ENCODE measurements at regions of chr11 and their contacts with region 1.

Region 1: DNA sequence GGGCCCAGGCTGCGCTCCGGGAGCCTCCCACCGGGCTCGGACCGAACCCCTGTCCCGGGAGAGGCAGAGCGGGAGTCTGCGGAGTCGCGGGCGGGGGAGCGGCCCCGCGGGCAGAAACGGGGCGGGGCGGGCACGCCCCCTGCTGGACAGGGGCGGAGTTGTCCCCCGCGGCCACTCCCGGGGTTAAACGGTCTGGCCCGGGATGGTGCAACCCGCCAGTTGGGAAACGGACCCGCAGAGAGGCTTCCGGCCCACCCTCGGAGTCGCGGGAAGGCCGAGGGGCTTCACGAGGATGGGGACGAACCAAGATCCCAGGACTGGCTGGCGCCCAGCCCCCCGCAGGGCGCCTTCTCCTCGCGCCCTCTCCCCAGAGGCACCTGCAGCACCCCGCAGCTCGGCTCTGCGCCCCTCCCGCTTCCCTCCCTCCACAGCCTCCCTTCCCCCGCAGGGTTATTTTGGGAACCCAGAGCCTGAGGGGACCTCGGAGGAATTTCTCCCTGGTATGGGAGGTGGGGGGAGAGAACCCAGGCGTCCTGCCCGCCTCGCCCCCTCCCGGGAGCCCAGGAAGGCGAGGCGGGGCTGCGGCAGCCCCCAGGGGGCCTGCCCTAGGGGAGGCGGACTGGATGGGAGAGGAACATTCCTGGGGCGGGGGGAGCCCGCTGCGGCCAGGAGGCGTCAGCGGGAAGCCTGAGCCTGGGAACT is 902 bp downstream of the RASGRP2 start:
- DNase-seq: peak; percentile 69
- H3K4me3 Mint-ChIP-seq: peak overlapping the region; percentile 92
- H3K27ac Mint-ChIP-seq: no peak overlapping the region
- H3K4me1 Mint-ChIP-seq: peaks cover 39% of the 10 kb centered on the region
- H3K27me3 Mint-ChIP-seq: no peaks in the 10 kb centered on the region

Region 2: DNA sequence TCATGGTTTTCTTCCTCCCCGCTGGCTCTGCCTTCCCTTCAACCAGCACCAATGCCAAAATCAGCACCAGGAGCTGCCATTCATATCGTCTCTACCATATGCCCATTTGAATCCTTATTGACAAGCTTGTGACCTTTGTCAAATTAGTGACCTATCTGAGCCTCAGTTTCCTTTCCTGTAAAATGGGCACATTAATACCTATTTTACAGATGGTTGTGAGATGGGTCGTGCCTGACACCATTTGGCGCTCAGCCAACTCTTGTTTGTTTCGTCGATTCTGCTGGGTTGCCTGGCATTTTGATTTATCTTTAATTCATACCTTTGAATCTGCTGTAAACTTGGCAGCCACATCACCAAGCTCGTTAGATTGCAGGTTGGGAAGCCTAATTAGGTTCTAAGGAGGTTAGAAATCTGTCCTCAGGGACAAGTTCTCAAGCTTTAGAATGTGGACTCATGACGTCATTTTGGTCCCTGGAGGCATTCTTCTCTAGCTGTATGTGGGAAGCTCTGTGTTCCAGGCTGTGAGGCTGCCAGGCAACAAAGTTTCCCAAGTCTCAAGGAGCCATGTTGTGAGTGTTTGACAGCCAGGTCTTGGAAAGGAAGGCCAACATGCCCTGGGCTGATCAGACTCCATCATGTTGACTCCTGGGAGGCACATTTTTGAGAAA is 323.1 kb before region 1 on chr11:
- CTCF ChIA-PET with region 1: no interaction called
- POLR2A ChIA-PET with region 1: no interaction called
- DNase-seq: no peak
- H3K4me3 Mint-ChIP-seq: no peak overlapping the region
- H3K27ac Mint-ChIP-seq: no peak overlapping the region
- H3K4me1 Mint-ChIP-seq: no peaks in the 10 kb centered on the region
- H3K27me3 Mint-ChIP-seq: no peaks in the 10 kb centered on the region

Region 3: DNA sequence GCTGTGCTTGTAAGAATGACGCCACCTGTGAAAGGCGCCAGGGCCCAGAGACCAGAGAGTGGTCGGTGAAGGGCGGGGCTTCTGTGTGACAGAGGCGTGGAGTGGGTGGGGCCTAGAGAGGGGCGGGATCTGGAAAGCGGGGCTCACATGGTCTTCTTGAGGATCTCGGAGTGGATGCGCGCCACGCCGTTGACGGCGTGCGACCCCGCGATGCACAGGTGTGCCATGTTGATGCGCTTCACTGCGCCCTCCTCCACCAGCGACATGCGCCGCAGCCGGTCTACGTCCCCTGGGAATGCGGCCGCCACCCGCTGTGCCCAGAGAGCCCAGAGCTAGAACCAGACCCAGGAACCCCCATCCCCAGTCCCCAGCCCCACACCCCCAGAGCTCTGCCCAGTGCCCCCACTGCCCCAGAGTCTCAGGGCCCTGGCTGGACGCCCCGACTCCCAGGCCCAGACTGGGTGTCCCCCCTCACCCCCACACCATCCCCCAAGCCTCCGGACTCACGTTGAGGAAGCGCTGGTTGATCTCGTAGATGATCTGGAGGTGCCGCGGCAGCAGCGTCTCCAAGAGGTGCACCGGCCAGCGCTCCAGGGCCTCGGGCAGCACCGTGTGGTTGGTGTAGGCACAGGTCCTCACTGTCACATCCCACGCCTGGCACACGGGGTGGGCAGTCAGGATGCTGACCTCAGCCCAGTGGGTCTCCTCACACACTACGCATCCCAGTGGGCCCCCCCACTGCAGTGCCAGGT is 10.5 kb after region 1 on chr11:
- CTCF ChIA-PET with region 1: interaction called, 10 read pairs
- POLR2A ChIA-PET with region 1: no interaction called
- DNase-seq: no peak
- H3K4me3 Mint-ChIP-seq: no peak overlapping the region
- H3K27ac Mint-ChIP-seq: peak overlapping the region; percentile 57
- H3K4me1 Mint-ChIP-seq: peaks cover 27% of the 10 kb centered on the region
- H3K27me3 Mint-ChIP-seq: no peaks in the 10 kb centered on the region

Region 4: DNA sequence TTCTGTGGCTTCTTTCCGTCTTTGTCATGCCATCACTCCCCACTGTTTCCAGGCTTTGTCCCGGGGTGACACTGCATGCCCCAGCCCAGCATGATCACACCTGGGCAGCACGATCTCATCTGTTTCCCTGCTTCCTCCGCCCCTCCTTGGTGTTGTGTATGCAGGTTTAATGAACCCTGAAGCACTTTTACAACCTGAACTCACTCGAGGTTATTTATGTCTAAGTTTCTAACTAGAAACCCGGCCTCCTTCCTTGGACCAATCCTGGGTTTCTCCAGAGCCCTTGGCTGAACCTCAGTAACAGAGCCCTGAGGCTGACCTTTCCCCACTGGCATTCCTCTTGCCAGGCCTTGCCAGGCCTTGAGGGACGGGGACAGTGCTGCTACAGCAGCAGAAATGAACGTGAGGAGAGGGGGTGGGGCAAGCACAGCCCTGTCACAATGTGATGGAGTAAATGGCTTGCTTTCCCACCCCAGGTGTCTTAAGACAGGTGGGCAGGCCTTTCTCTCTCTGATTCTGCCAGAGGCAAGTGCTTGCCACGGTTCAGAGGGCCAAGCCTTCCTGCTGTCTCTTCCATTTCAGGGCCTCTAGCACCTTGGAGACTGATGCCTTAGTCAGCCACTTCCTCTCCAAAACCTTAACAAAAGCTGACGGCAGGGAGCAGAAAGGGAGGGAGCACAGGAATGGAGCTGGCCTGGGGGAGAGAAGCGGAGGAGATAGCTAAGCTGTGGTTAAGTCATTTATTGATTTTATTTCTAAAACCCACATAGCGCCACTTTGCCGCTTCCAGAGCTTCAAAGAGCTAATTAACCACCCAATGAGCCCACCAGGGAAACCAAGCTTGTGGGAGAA is 19.9 kb after region 1 on chr11:
- CTCF ChIA-PET with region 1: interaction called, 25 read pairs
- POLR2A ChIA-PET with region 1: interaction called, 3 read pairs
- DNase-seq: peak; percentile 47
- H3K4me3 Mint-ChIP-seq: peak overlapping the region; percentile 64
- H3K27ac Mint-ChIP-seq: peak overlapping the region; percentile 94
- H3K4me1 Mint-ChIP-seq: peaks cover 83% of the 10 kb centered on the region
- H3K27me3 Mint-ChIP-seq: no peaks in the 10 kb centered on the region

Region 5: DNA sequence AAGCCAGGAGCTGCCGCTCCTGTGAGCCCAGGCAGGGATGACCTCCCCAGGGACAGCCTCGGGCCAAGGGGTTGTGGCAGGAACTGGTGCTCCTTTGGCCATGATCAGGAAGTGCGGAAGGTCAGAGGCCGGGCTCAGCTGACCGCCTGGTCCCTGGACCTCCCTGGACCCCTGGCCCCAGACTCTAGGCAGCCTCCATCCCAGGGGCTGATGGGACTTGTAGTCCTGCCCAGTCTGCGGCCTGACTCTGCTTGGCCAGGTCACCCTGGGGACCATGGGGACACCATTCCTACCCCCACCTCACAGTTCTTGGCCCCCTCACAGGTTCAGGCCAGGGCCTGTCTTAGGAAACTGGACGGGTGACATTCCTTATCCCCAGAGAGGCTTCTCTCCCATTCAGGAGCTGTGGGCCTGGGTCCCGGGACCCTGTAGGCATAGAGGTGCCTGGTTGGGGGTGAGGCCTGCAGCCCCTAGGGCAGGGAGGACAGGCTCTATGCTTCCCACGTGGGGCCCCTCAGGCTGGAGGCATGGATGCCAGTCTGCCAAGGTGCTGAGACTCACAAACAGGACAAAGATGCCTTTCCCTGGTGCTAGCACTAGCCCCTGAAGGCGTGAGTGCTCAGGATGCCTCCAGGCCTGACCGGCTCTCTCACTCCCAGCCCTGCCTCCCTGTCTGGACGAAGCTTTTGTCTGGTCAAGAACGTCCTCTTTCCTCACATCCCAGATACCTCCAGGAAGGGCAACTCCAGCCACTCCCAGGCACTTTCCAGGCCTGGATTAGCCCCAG is 99.1 kb after region 1 on chr11:
- CTCF ChIA-PET with region 1: no interaction called
- POLR2A ChIA-PET with region 1: no interaction called
- DNase-seq: no peak
- H3K4me3 Mint-ChIP-seq: no peak overlapping the region
- H3K27ac Mint-ChIP-seq: no peak overlapping the region
- H3K4me1 Mint-ChIP-seq: peaks cover 21% of the 10 kb centered on the region
- H3K27me3 Mint-ChIP-seq: no peaks in the 10 kb centered on the region